ENCODE measurements at regions of chr5 and their contacts with region 1.

Region 1: DNA sequence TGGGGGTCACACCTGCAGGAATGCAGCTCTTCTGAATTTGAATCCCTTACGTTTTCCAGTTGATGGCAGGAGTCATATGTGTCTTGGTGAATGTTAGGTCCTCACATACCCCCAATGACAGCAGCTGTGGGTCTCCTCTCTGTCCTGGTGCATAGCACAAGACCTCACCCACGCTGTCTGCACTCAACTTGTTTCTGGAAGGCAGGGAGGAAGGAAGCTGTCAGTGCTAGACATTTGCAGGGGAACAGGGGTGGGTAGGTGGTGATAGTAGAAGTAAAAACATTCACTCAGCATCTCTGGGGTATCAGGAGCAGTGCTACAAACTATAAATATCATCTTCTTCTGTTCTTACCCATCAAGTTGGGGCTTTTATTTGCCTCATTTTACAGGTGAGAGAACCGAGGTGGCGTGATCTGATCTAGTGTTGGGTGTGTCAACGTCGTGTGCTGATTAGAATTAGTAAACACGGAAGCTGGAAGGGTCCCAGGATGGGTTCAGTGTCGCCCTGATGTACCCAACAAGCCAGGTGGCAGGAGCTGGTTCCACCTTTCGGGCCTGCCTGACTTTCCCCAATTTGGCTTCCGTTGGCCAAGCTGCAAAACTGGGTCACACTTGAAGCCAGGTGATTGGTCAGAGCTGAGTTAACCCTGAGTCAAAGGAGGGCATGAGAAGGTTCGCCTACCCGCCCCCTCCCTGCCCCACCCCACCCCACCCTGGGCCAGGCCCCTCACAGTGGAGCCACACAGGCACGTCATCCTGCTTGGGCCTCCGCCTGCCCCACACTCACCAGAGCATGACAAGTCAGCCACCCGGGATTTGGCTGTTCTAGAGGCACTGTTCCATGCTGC is 15.8 kb downstream of the ERGIC1 start:
- DNase-seq: no peak
- ATAC-seq: no peak
- H3K4me3 Mint-ChIP-seq: no peak overlapping the region
- H3K27ac Mint-ChIP-seq: no peak overlapping the region
- H3K4me1 Mint-ChIP-seq: peaks cover 38% of the 10 kb centered on the region
- H3K27me3 Mint-ChIP-seq: no peaks in the 10 kb centered on the region

Region 2: DNA sequence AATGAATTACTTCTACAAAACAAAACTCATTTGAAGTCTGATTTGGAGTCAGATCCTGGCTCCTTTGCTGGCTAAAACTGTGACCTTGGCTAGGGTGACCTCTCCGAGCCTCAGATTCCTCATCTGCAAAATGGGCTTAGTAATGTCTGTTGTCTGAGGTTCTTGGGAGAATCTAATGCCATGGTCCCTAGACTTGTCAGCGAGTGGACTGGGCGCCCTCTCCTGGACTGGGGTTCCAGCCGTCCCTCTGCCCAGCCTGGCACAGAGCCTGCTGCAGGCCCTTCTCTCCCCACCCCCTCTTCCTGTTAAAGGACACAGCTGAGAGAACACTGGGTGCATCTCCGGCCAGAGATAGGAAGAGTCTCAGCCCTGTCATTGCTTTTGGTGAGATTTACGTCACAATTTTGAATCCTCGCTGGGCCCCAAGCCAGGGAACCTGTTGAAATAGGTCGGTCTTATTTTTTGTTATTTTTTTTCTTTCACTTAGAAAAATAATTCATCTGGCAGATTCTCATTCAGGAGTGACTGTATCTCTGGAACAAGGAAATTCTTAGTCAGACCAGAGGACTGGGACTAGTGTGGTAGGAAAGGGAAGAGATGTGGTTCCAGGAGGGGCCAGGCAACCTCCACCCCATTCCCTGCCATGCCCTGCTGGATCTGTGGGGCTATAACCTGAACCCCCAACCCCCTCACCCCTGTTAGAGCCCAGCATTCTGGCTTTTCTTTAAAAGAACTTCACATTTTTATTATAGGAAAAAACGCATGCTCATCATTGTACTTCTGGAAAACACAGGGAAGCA is 61.2 kb after region 1 on chr5:
- CTCF ChIA-PET with region 1: no interaction called
- POLR2A ChIA-PET with region 1: no interaction called
- intact Hi-C with region 1: loop called in 1 of 2 experiments (anchors 10 kb)
- DNase-seq: peak; percentile 58
- ATAC-seq: peak; percentile 65
- H3K4me3 Mint-ChIP-seq: no peak overlapping the region
- H3K27ac Mint-ChIP-seq: no peak overlapping the region
- H3K4me1 Mint-ChIP-seq: peaks cover 2% of the 10 kb centered on the region
- H3K27me3 Mint-ChIP-seq: no peaks in the 10 kb centered on the region

Region 3: GRCh38 chr5:173065155-173065554 is 215.3 kb after region 1 on chr5:
- CTCF ChIA-PET with region 1: no interaction called
- POLR2A ChIA-PET with region 1: no interaction called
- intact Hi-C with region 1: no loop called
- DNase-seq: no peak
- ATAC-seq: peak; percentile 88
- H3K4me3 Mint-ChIP-seq: peak overlapping the region; percentile 68
- H3K27ac Mint-ChIP-seq: peak overlapping the region; percentile 93
- H3K4me1 Mint-ChIP-seq: peaks cover 79% of the 10 kb centered on the region
- H3K27me3 Mint-ChIP-seq: no peaks in the 10 kb centered on the region